Right ventricle myocardium inferior (tissue), 1 donor: ENCODE measurements at regions of chr1 and their contacts with region 1.

Region 1: DNA sequence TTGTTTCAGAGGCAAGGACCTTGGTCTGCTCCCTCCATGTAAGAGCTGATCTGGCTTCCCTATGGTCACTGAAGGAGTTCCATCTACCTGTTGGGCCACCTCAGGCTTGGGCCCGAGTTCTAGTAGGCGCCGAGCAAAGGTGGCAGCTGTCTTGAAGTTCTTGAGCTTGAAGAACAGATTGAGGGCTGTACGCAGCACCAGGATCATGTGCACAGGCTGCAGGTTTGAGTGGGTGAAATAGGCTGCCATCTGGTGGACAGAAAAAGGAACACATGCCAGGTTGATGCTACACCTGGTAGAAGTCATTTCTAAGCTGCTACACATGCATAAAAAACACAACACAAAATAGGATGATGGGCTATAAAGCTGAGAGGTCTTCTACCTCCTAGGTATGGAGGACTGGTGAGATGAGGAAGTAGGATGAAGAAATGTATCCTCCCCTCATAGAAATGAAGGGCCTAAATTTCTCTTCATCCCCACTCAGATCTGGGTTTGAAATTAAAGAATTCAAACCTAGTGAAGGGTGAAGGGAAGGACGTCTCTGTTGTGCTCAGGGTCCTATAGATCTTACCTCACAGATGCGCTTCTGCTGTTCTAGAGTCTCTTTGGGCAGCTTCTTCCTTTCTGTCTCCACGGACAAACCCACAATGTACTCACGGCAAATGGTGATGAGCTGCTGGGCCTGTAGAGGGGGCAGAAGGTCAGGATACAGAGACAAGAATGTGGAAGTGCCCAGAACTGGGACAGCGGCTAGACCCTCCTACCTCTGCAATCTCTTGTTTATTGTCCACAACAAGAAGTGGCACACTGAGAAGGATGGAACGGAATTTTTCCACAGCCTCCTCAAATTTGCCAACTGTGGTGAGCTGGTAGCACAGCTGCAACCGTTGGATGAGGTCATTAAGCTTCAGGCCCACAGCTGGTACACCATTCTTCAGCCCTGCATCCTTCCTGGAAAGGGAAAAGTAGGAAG is 6.6 kb upstream of the PEX19 start:
- DNase-seq: no peak
- ATAC-seq: peak; percentile 85

Region 2: DNA sequence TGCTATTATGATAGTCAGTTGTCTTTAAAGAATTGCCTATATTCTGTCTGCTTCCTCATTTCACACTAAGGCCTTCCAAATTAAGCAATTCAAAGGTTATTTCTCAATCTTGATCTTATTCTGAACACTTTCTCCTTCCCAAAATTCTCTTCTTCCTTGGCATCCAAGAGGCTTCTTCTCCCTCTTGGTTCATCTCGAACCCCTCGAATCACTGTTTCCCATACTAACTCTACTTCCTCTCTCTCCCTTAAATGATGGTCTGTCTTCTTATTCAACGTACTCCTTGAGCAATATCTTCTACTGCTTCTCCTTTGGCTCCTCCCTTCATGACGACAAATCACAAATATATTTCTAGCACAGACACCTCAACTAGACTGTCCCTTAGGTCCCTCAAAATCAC is 47.0 kb after region 1 on chr1:
- intact Hi-C with region 1: loop called (anchors 5 kb)
- DNase-seq: no peak
- ATAC-seq: no peak

Region 3: DNA sequence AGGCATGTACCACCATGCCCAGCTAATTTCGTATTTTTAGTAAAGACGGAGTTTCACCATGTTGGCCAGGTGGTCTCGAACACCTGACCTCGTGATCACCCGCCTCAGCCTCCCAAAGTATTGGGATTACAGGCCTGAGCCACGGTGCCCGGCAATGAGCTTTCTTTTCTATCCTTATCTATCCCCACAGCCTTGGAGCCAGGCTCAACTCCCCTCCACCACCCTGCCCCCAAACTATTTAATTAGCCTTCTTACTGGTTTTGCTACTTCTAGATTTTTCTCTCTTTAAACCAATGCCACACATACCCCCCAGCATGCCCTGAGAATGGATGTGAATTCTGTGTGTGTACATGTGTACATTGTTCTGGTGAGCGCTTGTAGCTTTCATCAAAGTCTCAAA is 103.1 kb after region 1 on chr1:
- intact Hi-C with region 1: no loop called
- DNase-seq: no peak
- ATAC-seq: no peak

Region 4: DNA sequence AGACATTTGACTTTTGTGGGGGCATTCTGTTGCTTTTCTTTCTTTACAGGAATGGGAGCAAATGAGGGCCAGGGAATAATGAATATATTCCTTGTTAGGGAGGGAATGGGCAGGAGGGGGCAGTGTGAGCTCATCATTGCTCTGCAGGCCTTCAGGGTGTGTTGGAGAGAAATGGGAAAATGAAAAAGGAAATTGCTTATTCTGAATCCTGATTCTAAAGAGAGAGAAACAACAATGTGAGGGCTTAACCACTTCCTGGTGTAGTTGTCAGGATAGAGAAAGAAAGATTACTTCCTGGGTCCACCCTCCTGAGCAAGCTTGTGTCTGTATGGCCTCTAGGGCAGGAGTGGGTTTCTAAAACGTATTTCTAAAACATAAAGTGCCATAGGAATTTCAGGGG is 137.1 kb after region 1 on chr1:
- intact Hi-C with region 1: no loop called
- DNase-seq: no peak
- ATAC-seq: peak; percentile 68

Region 5: GRCh38 chr1:160460683-160461287 is 169.3 kb after region 1 on chr1:
- intact Hi-C with region 1: no loop called
- DNase-seq: no peak
- ATAC-seq: no peak